ENCODE measurements at regions of chr13 and their contacts with region 1.

Region 1: GRCh38 chr13:22801402-22802003 is 379.3 kb upstream of the SGCG start:
- DNase-seq: no peak
- ATAC-seq: no peak
- H3K4me3 ChIP-seq: no peak overlapping the region
- H3K27ac ChIP-seq: no peak overlapping the region
- H3K4me1 ChIP-seq: no peaks in the 10 kb centered on the region
- H3K27me3 ChIP-seq: no peaks in the 10 kb centered on the region
- CTCF ChIP-seq: peak in 2 of 3 experiments; percentile 16 to 39; a peak in 3 of 6 replicates
- POLR2A ChIP-seq: no peak
- RAD21 ChIP-seq: peak; percentile 54

Region 2: DNA sequence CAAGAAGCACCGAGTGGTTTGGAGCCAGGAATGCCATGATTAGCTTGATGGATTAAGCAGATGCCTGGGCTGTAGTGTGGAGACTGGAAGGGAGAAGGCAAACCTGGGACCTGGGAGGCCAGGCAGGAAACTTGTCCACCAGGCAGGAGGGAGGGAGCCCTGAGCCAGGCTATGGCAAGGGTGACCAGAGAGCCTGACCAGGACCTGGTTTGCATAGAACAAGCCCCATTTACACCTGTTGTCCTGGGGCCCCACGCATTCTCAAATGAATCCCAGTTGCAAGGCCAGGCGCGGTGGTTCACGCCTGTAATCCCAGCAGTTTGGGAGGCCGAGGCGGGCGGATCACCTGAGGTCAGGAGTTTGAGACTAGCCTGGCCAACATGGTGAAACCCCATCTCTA is 1690.0 kb before region 1 on chr13:
- CTCF ChIA-PET with region 1: no interaction called
- POLR2A ChIA-PET with region 1: no interaction called
- RAD21 ChIA-PET with region 1: no interaction called
- intact Hi-C with region 1: loop called (anchors 2 kb)
- DNase-seq: no peak
- ATAC-seq: no peak
- H3K4me3 ChIP-seq: no peak overlapping the region
- H3K27ac ChIP-seq: no peak overlapping the region
- H3K4me1 ChIP-seq: no peaks in the 10 kb centered on the region
- H3K27me3 ChIP-seq: no peaks in the 10 kb centered on the region
- CTCF ChIP-seq: no peak
- POLR2A ChIP-seq: no peak
- RAD21 ChIP-seq: no peak

Region 3: GRCh38 chr13:21913010-21913409 is 888.5 kb before region 1 on chr13:
- CTCF ChIA-PET with region 1: interaction called, 11 read pairs
- POLR2A ChIA-PET with region 1: no interaction called
- RAD21 ChIA-PET with region 1: no interaction called
- intact Hi-C with region 1: no loop called
- DNase-seq: peak; percentile 12
- ATAC-seq: peak; percentile 82
- H3K4me3 ChIP-seq: no peak overlapping the region
- H3K27ac ChIP-seq: no peak overlapping the region
- H3K4me1 ChIP-seq: no peaks in the 10 kb centered on the region
- H3K27me3 ChIP-seq: no peaks in the 10 kb centered on the region
- CTCF ChIP-seq: peak; percentile 15 to 59 (median 53); a peak in 5 of 6 replicates
- POLR2A ChIP-seq: no peak
- RAD21 ChIP-seq: peak; percentile 44; the same call in 1 of the 2 replicates

Region 4: DNA sequence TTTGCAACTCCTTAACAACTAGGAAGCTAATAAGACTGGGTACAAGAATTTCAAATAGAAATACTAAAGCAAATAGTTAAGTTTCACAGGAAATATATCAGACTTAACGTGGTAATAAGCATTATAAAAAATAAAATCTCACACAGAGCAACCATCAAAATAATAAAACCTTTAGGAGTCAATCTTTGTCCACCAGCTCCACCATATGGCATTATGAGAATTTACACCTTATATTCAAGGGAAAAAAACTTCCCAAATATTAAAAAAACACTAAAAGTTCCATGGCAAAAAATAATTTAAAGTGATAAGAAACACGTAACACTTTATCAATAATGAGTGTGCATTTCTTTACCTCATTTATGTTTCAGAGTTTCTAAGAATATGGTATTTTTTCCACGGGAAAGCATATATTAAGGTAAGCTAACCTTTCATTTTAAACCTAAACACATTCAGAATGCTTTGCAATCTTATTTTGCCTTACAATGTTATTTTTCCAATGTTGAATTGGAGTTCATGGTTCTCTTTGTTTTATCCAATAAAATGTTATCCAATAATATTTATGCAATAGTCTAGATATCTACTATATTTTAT is 43.9 kb before region 1 on chr13:
- CTCF ChIA-PET with region 1: no interaction called
- POLR2A ChIA-PET with region 1: no interaction called
- RAD21 ChIA-PET with region 1: no interaction called
- intact Hi-C with region 1: no loop called
- DNase-seq: no peak
- ATAC-seq: 0 out of 2 replicates have a peak, but pooled peaks have one; percentile 53
- H3K4me3 ChIP-seq: no peak overlapping the region
- H3K27ac ChIP-seq: no peak overlapping the region
- H3K4me1 ChIP-seq: no peaks in the 10 kb centered on the region
- H3K27me3 ChIP-seq: no peaks in the 10 kb centered on the region
- CTCF ChIP-seq: peak; percentile 32 to 64 (median 34); a peak in 4 of 6 replicates
- POLR2A ChIP-seq: no peak
- RAD21 ChIP-seq: peak; percentile 57

Region 5: GRCh38 chr13:23087880-23088279 is 286.4 kb after region 1 on chr13:
- CTCF ChIA-PET with region 1: interaction called, 5 read pairs
- POLR2A ChIA-PET with region 1: no interaction called
- RAD21 ChIA-PET with region 1: no interaction called
- intact Hi-C with region 1: loop called (anchors 5 kb)
- DNase-seq: peak; percentile 35
- ATAC-seq: peak; percentile 91
- H3K4me3 ChIP-seq: no peak overlapping the region
- H3K27ac ChIP-seq: no peak overlapping the region
- H3K4me1 ChIP-seq: no peaks in the 10 kb centered on the region
- H3K27me3 ChIP-seq: no peaks in the 10 kb centered on the region
- CTCF ChIP-seq: peak in 2 of 3 experiments; percentile 71 to 73; a peak in 4 of 6 replicates
- POLR2A ChIP-seq: no peak
- RAD21 ChIP-seq: 0 out of 2 replicates have a peak, but pooled peaks have one; percentile 9

Region 6: GRCh38 chr13:23319883-23320224 is 518.4 kb after region 1 on chr13:
- CTCF ChIA-PET with region 1: interaction called, 8 read pairs
- POLR2A ChIA-PET with region 1: no interaction called
- RAD21 ChIA-PET with region 1: no interaction called
- intact Hi-C with region 1: loop called (anchors 1 kb)
- DNase-seq: no peak
- ATAC-seq: no peak
- H3K4me3 ChIP-seq: no peak overlapping the region
- H3K27ac ChIP-seq: no peak overlapping the region
- H3K4me1 ChIP-seq: peaks cover 11 to 15% of the 10 kb centered on the region in 2 experiments
- H3K27me3 ChIP-seq: no peaks in the 10 kb centered on the region
- CTCF ChIP-seq: no peak
- POLR2A ChIP-seq: no peak
- RAD21 ChIP-seq: no peak